Aorta (tissue), 5 donors: ENCODE measurements at regions of chrX and their contacts with region 1.

Region 1: GRCh38 chrX:111869639-111870034 is 6.3 kb upstream of the TRPC5OS start:
- DNase-seq: no peak
- ATAC-seq: peak; percentile 66
- H3K4me3 ChIP-seq: no peak overlapping the region
- H3K27ac ChIP-seq: no peak overlapping the region
- H3K4me1 ChIP-seq: no peaks in the 10 kb centered on the region
- H3K27me3 ChIP-seq: no peaks in the 10 kb centered on the region

Region 2: DNA sequence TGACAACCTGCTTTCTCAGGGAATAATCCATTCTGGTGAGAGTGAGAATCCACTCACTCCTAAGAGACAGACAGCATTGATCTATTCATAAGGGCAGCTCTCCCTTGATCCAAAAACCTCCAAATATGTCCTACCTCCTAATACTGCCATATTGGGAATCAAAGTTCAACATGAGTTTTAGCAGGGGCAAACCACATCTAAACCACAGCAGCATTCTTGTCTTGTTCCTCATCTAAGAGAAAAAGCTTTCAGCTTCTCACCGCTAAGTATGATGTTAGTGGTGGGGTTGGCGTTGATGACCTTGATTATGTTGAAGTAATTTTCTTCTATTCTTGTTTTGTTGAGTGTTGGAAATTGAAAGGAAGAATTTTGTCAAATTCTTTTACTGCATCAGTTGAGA is 288.6 kb before region 1 on chrX:
- intact Hi-C with region 1: no loop called
- DNase-seq: no peak
- ATAC-seq: no peak
- H3K4me3 ChIP-seq: no peak overlapping the region
- H3K27ac ChIP-seq: no peak overlapping the region
- H3K4me1 ChIP-seq: no peaks in the 10 kb centered on the region
- H3K27me3 ChIP-seq: no peaks in the 10 kb centered on the region

Region 3: DNA sequence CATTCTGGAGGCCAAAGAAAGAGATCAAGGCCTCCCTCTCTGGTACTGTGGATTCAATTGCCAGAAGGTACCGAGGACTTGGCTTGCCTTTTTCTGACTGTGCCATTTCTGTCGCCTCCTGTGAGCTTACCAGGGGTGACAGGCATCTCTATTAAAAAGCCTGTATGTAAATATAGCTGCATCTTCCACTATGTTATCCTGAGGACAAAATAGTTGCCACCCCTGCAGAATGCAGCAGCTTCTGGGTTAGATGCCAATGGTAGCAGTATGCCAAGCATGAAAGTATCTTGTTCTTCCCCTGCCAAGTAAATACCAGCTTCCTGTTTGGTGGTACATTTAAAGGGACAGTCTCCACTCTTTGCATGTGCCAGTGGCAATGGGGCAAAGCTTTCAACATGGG is 17.0 kb after region 1 on chrX:
- intact Hi-C with region 1: no loop called
- DNase-seq: no peak
- ATAC-seq: no peak
- H3K4me3 ChIP-seq: no peak overlapping the region
- H3K27ac ChIP-seq: no peak overlapping the region
- H3K4me1 ChIP-seq: no peaks in the 10 kb centered on the region
- H3K27me3 ChIP-seq: no peaks in the 10 kb centered on the region

Region 4: GRCh38 chrX:112636951-112637541 is 767.4 kb after region 1 on chrX:
- intact Hi-C with region 1: loop called in 1 of 2 experiments (anchors 10 kb)
- DNase-seq: no peak
- ATAC-seq: no peak
- H3K4me3 ChIP-seq: no peak overlapping the region
- H3K27ac ChIP-seq: no peak overlapping the region
- H3K4me1 ChIP-seq: no peaks in the 10 kb centered on the region
- H3K27me3 ChIP-seq: no peaks in the 10 kb centered on the region